PC-3 (cell line): ENCODE measurements at regions of chr7 and their contacts with region 1.

Region 1: DNA sequence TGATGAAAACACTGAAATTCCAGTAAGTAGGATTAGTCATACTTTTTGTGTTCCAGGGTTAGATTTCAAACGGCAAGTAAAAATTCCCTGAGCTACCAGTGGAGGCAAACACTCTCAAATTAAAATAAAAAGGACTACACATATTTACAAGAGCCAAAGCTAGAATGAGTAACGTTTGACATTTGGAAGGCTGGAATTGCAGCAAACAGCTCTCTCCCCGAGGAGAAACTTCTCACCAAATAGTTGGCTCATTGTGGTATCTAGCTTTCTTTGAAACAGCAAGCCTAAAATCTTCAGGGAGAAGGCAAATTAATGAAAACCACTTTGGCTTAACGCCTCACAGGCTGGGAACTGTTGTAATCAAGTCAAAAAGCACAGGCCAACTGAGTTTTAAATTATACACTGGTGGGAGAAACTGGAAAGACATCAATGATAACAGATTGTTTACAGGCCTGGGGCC is 288.3 kb downstream of the SNX13 start:
- DNase-seq: peak; percentile 64
- ATAC-seq: peak; percentile 92
- H3K4me3 ChIP-seq: no peak overlapping the region
- H3K27ac ChIP-seq: peak overlapping the region; percentile 64
- H3K4me1 ChIP-seq: peaks cover 12% of the 10 kb centered on the region
- H3K27me3 ChIP-seq: no peaks in the 10 kb centered on the region
- CTCF ChIP-seq: no peak

Region 2: DNA sequence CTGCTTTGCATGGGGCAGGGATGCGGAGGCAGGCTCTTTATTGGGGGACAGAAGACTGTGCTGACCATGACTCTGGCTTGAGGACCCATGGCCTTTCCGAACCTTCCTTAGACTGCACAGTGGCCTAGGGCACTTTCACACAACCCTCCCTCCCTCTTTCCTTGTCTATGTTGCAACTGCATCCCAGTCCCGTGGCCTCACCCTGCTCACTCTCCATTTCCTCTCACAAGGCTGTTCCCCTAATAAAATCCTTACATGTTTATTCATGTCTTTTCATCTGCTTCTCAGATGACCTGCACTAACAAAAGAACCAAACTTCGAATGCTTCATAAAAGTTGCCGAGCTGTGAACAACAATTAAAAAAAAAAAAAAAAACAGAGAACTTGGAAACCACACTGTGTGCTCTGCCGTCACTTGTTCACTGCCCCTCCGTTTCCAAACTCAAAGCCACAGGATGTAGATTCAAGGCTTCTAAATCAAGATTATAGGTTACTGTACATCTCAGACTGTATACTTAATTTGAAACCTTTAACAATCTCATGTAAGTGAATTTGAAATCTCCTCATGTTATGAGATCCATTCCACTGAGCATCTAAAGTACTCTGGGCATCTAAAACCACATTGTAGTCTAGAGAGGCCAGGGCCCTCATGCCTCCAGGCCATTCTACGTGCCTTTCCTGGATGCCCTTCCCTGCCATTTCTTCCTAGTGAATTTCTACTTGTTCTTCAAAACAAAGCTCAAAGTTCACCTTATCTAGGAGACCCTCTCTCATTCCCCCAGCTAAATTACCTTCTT is 22.4 kb after region 1 on chr7:
- CTCF ChIA-PET with region 1: interaction called, 6 read pairs
- POLR2A ChIA-PET with region 1: no interaction called
- intact Hi-C with region 1: loop called (anchors 1 kb)
- DNase-seq: peak; percentile 22
- ATAC-seq: peak; percentile 82
- H3K4me3 ChIP-seq: no peak overlapping the region
- H3K27ac ChIP-seq: peak overlapping the region; percentile 36
- H3K4me1 ChIP-seq: peaks cover 12% of the 10 kb centered on the region
- H3K27me3 ChIP-seq: no peaks in the 10 kb centered on the region
- CTCF ChIP-seq: no peak

Region 3: DNA sequence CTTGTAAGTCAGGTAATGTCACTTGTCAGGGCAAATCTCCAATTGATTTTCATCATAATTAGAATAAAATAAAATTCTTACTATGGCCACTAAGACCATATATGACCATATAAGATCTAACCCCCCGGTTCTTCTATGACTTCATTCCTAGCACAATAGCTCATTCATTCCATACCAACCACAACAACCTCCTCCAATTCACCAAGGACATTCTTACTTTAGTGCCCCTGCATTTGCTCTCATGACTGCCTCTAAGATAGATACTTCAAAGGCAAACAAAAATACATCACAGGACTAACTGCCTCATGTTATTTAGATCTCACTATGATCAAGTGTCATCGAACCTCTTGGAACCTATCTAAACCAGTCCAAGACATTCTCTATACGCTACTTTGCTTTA is 197.5 kb after region 1 on chr7:
- CTCF ChIA-PET with region 1: no interaction called
- POLR2A ChIA-PET with region 1: no interaction called
- intact Hi-C with region 1: no loop called
- DNase-seq: no peak
- ATAC-seq: no peak
- H3K4me3 ChIP-seq: no peak overlapping the region
- H3K27ac ChIP-seq: no peak overlapping the region
- H3K4me1 ChIP-seq: peaks cover 7% of the 10 kb centered on the region
- H3K27me3 ChIP-seq: no peaks in the 10 kb centered on the region
- CTCF ChIP-seq: no peak